ENCODE measurements at regions of chr14 and their contacts with region 1.

Region 1: GRCh38 chr14:59126710-59127432 is 61.6 kb upstream of the DAAM1 start:
- DNase-seq: no peak
- ATAC-seq: peak; percentile 85

Region 2: GRCh38 chr14:59055439-59056045 is 71.3 kb before region 1 on chr14:
- intact Hi-C with region 1: no loop called
- DNase-seq: no peak
- ATAC-seq: peak; percentile 63

Region 3: GRCh38 chr14:59576332-59577294 is 449.7 kb after region 1 on chr14 and contains the start of gene CCDC175:
- intact Hi-C with region 1: loop called (anchors 10 kb)
- DNase-seq: peak; percentile 93
- ATAC-seq: peak; percentile 81
- total RNA-seq, gene CCDC175: not detected